ENCODE measurements at regions of chr12 and their contacts with region 1.

Region 1: DNA sequence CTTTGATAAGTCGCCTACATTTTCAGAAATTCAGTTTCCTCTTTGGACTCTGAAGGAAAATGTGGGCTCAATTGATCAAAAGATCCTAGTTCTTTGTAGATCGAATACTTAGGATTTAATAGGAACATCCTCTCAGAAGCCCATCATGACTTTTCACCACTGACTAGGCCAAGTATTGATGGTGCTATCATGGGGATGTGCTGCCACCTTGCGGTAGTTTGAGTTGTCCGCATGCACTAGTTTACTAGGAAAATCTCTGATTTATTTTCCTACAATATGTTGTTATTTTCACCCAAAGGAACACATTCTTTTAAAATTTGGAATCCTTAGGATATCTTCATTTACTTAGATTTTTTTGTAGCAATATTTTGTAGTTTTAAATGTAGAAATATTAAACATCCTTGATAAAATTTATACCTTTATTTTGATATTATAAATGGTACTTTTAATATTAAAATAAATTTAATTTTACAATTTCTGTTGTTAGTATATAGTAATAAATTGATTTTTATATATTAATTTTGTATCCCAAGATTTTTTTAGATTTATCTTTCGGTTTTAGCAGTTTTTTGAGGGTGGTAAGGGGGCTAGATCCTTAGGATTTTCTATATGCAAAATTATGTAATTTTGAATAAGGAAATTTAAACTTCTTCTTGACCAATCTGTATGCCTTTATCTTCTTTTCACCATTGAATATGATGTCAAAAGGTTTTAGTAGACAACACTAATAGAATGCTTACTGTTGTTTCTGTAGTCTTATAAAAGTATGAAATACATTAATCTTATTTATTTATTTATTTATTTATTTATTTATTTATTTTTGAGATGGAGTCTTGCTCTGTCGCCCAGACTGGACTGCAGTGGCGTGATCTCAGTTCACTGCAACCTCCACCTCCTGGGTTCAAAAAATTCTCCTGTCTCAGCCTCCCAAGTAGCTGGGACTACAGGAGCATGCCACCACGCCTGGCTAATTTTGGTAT is 52.9 kb upstream of the OR9K2 start:
- DNase-seq: peak; percentile 87
- H3K4me3 Mint-ChIP-seq: no peak overlapping the region
- H3K27ac Mint-ChIP-seq: no peak overlapping the region
- H3K4me1 Mint-ChIP-seq: peaks cover 3% of the 10 kb centered on the region
- H3K27me3 Mint-ChIP-seq: peaks cover 26% of the 10 kb centered on the region

Region 2: DNA sequence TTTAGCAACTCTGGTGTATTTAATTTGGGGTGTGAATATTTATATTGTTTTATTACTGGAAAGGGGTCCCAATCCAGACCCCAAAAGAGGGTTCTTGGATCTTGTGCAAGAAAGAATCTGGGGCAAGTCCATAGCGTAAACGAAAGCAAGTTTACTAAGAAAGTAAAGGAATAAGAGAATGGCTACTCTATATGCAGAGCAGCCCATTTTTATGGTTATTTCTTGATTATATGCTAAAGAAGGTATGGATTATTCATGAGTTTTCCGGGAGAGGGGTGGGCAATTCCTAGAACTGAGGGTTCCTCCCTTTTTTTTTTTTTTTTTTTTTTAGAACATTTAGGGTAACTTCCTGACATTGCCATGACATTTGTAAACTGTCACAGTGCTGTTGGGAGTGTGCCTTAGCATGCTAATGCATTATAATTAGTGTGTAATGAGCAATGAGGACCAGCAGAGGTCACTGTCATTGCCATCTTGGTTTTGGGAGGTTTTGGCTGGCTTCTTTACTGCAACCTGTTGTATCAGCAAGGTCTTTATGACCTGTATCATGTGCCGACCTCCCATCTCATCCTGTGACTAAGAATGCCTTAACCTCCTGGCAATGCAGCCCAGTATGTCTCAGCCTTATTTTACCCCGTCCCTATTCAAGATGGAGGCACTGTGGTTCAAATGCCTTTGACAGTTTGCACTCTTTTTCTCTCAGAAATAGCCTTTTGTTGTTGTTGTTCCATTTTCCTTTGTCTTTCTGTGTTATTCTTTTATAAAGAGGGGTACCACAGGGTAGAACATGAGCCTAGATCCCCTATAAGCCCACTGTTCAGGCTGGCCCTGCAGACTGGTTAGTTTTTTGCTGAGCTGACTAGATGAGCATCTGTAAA is 349.7 kb before region 1 on chr12:
- CTCF ChIA-PET with region 1: interaction called, 27 read pairs
- DNase-seq: peak; percentile 44
- H3K4me3 Mint-ChIP-seq: no peak overlapping the region
- H3K27ac Mint-ChIP-seq: no peak overlapping the region
- H3K4me1 Mint-ChIP-seq: peaks cover 32% of the 10 kb centered on the region
- H3K27me3 Mint-ChIP-seq: peaks cover 21% of the 10 kb centered on the region

Region 3: DNA sequence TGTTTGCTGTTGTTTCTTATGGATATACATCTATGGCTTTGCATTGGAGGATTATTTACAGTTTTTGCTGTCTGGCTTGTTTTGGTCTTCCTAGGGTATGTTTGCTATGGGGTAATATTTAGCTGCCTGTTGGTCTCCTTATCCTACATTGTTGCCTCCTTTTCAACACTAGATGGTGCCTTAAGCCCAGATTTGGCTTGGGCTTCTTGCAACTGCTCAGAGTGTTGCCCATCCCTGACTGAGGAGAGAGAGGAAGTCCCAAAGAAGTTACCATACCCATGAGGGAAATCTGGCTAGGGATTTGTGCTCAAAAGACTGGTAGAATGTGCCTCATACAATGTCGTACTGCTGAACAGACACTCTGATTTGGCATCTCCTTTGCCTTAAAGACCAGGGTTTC is 313.6 kb before region 1 on chr12:
- CTCF ChIA-PET with region 1: interaction called, 53 read pairs
- DNase-seq: peak; percentile 38
- H3K4me3 Mint-ChIP-seq: no peak overlapping the region
- H3K27ac Mint-ChIP-seq: no peak overlapping the region
- H3K4me1 Mint-ChIP-seq: peaks cover 22% of the 10 kb centered on the region
- H3K27me3 Mint-ChIP-seq: no peaks in the 10 kb centered on the region

Region 4: DNA sequence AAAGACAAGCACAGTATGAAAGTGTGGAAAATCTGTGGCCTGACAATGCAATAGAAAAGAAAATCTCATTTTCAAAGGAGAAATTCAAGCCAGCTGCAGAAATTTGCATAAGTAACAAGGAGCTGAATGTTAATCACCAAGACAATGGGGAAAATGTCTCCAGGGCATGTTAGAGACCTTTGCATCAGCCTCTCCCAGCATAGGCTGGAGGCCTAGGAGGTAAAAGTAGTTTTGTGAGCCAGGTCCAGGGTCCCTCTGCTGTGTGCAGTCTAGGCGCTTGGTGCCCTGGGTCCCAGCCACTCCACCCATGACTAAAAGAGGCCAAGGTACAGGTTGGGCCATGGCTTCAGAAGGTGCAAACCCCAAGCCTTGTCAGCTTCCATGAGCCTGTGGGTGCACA is 147.1 kb before region 1 on chr12:
- CTCF ChIA-PET with region 1: no interaction called
- DNase-seq: no peak
- H3K4me3 Mint-ChIP-seq: no peak overlapping the region
- H3K27ac Mint-ChIP-seq: no peak overlapping the region
- H3K4me1 Mint-ChIP-seq: no peaks in the 10 kb centered on the region
- H3K27me3 Mint-ChIP-seq: no peaks in the 10 kb centered on the region

Region 5: GRCh38 chr12:54958048-54958658 is 115.2 kb before region 1 on chr12:
- CTCF ChIA-PET with region 1: interaction called, 24 read pairs
- DNase-seq: peak; percentile 65
- H3K4me3 Mint-ChIP-seq: no peak overlapping the region
- H3K27ac Mint-ChIP-seq: no peak overlapping the region
- H3K4me1 Mint-ChIP-seq: peaks cover 73% of the 10 kb centered on the region
- H3K27me3 Mint-ChIP-seq: no peaks in the 10 kb centered on the region

Region 6: DNA sequence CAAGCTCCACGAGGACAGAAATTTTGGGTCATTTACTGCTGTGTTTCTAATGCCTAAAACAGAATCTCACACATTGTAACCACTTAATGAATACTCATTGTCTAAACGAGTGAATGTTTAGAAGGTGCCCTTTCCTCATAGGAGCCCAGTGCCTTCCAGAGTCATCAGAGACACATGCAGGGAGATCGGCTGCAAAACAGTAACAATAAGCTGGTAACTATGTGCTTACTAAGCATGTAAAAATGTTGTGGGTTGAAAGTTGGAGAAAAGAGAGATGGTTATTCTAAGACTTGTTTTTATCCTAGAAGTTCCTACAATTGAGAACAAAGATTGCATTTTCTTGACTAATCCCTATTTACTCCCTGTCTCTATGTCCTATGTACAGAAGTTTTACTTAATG is 96.2 kb before region 1 on chr12:
- CTCF ChIA-PET with region 1: interaction called, 14 read pairs
- DNase-seq: no peak
- H3K4me3 Mint-ChIP-seq: peak overlapping the region; percentile 47
- H3K27ac Mint-ChIP-seq: peak overlapping the region; percentile 84
- H3K4me1 Mint-ChIP-seq: peaks cover 95% of the 10 kb centered on the region
- H3K27me3 Mint-ChIP-seq: no peaks in the 10 kb centered on the region

Region 7: DNA sequence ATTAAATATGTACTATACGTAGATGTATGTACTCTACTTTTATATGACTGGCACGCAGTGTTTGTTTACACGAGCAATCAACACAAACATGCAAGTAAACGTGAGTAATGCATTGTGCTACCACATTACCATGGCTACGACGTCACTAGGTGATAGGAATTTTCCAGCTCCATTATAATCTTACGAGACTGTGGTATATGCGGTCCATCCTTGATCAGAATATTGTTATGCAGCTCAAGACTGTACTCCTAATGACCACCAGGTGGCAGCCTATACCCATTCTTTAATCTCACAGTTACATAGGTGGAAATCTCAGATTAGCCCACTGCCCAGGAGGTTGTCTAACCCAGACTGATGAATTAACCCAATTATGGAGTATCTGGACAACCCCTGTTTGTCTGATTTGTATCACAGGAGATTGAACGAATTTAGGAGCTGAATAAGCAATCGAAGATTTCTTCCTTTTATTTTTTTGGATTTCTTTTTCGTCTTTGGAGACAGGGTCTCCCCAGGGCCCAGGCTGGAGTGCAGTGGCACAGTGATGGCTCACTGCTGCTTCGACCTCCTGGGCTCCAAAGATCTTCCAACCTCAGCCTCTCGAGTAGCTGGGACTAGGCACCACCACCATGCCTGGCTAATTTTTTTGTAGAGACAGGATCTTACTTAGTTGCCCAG is 80.0 kb before region 1 on chr12:
- CTCF ChIA-PET with region 1: interaction called, 522 read pairs
- DNase-seq: peak; percentile 67
- H3K4me3 Mint-ChIP-seq: no peak overlapping the region
- H3K27ac Mint-ChIP-seq: no peak overlapping the region
- H3K4me1 Mint-ChIP-seq: peaks cover 43% of the 10 kb centered on the region
- H3K27me3 Mint-ChIP-seq: peaks cover 5% of the 10 kb centered on the region

Measured in activated naive CD4-positive, alpha-beta T cell treated with anti-CD3 and anti-CD28 coated beads, Interleukin-2, amount 10 ng/mL, durations not matched to agents 7 days and 5 days (primary cell).